Breast epithelium (tissue), 4 donors: ENCODE measurements at regions of chr5 and their contacts with region 1.

Region 1: DNA sequence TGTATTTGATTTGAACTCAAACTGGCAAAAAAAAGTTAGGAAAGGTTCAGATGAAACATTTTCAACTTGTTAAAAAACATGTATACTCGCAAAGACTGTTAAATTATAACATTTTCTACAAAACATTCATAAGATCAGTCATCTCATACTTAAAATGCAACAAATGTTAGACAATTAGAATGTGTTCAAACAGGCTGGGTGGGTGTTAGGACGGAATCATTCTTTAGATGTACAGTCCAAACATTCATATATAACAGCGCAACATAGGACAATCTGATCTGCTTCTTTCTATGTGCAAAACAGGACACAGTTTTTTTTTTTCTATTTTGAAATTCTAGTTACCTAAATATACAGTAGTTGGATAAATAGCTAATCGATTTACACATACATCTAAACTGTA is 22.2 kb downstream of the IL4 start:
- DNase-seq: no peak
- H3K4me3 ChIP-seq: no peak overlapping the region
- H3K27ac ChIP-seq: no peak overlapping the region
- H3K4me1 ChIP-seq: no peaks in the 10 kb centered on the region
- H3K27me3 ChIP-seq: no peaks in the 10 kb centered on the region
- CTCF ChIP-seq: no peak
- POLR2A ChIP-seq: no peak

Region 2: GRCh38 chr5:132556763-132557477 is 139.0 kb before region 1 on chr5 and contains the start of gene RAD50:
- intact Hi-C with region 1: loop called (anchors 5 kb)
- DNase-seq: peak; percentile 87 to 90
- H3K4me3 ChIP-seq: peak within 1 kb of the TSS; percentile 70 to 86 (median 71)
- H3K27ac ChIP-seq: peak within 1 kb of the TSS; percentile 91 to 95
- H3K4me1 ChIP-seq: peaks cover 0 to 6% of the 10 kb centered on the region in 2 donors
- H3K27me3 ChIP-seq: no peaks in the 10 kb centered on the region
- CTCF ChIP-seq: no peak
- POLR2A ChIP-seq: peak; percentile 88
- total RNA-seq, gene RAD50: 44.2 to 47.4 (median 44.6) TPM

Region 3: DNA sequence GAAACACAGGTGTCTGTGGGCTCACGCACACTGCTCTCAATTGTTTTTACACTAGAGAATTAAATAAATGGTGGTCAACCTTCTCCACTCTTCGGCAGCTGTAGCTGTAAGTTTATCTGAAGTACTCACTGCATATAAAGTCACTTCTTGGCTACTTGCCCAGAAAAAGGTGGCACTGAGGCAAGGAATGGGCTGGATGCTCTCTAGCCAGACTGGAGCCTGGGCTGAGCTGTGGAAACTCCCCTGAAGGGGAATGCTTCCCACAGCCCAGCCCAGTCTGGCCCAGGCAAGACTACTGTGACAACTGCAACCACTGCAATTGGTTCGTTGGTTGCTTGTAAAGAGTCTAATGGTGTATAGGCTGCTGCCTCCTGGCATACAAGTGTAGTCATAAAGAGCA is 182.0 kb after region 1 on chr5:
- intact Hi-C with region 1: no loop called
- DNase-seq: no peak
- H3K4me3 ChIP-seq: no peak overlapping the region
- H3K27ac ChIP-seq: no peak overlapping the region
- H3K4me1 ChIP-seq: no peaks in the 10 kb centered on the region
- H3K27me3 ChIP-seq: no peaks in the 10 kb centered on the region
- CTCF ChIP-seq: no peak
- POLR2A ChIP-seq: no peak